Breast epithelium (tissue), 4 donors: ENCODE measurements at regions of chr1 and their contacts with region 1.

Region 1: DNA sequence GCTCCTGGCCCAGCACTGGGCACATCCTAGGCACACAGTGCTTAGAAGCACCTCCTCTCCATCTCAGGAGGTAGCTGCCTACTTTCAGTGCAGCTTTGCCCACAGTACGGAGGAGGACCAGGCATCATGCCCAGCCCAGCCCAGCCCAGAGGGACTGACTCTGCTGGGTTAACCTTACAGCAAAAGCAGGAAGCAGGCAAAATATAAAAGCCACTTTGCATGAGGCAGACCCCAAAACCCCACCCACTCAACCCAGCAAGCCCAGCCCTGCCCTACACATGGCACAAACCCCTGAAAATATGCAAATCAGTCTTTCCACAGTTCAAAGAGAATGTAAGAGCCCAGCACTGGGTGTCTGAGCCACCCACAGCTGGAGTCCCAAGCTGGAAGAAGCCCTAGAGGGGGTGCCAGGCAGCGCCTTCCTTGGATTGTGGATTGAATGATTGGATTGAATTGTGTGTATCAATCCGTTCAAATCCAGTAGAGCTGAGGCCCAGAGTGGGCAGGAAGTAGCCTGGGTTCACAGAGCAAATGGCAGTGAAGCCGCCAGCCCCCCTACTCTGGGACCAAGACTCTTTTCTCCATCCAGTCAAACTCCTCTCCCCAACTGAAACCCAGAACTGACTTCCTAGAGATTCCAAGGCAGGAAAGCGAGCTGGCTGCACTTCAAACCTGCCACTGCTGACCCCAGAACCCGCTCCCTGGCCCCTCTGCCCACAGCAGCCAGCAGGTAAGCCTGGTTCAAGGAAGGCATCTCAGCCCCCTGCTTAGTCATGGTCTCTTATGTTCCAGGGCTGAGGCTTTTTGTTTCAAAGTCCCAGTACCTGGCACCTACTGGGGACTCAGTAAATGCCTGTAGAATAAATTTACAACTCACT is 117.7 kb downstream of the LACTBL1 start:
- DNase-seq: no peak
- H3K4me3 ChIP-seq: no peak overlapping the region
- H3K27ac ChIP-seq: no peak overlapping the region
- H3K4me1 ChIP-seq: no peaks in the 10 kb centered on the region
- H3K27me3 ChIP-seq: no peaks in the 10 kb centered on the region
- CTCF ChIP-seq: no peak
- POLR2A ChIP-seq: no peak

Region 2: GRCh38 chr1:22831729-22832413 is 23.1 kb before region 1 on chr1:
- intact Hi-C with region 1: loop called (anchors 1 kb)
- DNase-seq: peak in 1 of 2 donors; percentile 39
- H3K4me3 ChIP-seq: no peak overlapping the region
- H3K27ac ChIP-seq: no peak overlapping the region
- H3K4me1 ChIP-seq: peaks cover 0 to 9% of the 10 kb centered on the region in 2 donors
- H3K27me3 ChIP-seq: no peaks in the 10 kb centered on the region
- CTCF ChIP-seq: no peak
- POLR2A ChIP-seq: no peak